Caco-2 (cell line): ENCODE measurements at regions of chr14 and their contacts with region 1.

Region 1: GRCh38 chr14:27890259-27890658 is 876.3 kb upstream of the FOXG1 start:
- DNase-seq: no peak
- H3K4me3 ChIP-seq: no peak overlapping the region
- H3K4me3 Mint-ChIP-seq: no peak overlapping the region
- H3K27ac Mint-ChIP-seq: no peak overlapping the region
- H3K4me1 ChIP-seq: no peaks in the 10 kb centered on the region
- H3K4me1 Mint-ChIP-seq: no peaks in the 10 kb centered on the region
- H3K27me3 ChIP-seq: no peaks in the 10 kb centered on the region
- H3K27me3 Mint-ChIP-seq: no peaks in the 10 kb centered on the region
- CTCF ChIP-seq: no peak

Region 2: GRCh38 chr14:27845241-27845850 is 44.9 kb before region 1 on chr14:
- CTCF ChIA-PET with region 1: no interaction called
- POLR2A ChIA-PET with region 1: no interaction called
- intact Hi-C with region 1: no loop called
- DNase-seq: no peak
- H3K4me3 ChIP-seq: no peak overlapping the region
- H3K4me3 Mint-ChIP-seq: no peak overlapping the region
- H3K27ac Mint-ChIP-seq: no peak overlapping the region
- H3K4me1 ChIP-seq: no peaks in the 10 kb centered on the region
- H3K4me1 Mint-ChIP-seq: peaks cover 8% of the 10 kb centered on the region
- H3K27me3 ChIP-seq: no peaks in the 10 kb centered on the region
- H3K27me3 Mint-ChIP-seq: peaks cover 2% of the 10 kb centered on the region
- CTCF ChIP-seq: no peak

Region 3: DNA sequence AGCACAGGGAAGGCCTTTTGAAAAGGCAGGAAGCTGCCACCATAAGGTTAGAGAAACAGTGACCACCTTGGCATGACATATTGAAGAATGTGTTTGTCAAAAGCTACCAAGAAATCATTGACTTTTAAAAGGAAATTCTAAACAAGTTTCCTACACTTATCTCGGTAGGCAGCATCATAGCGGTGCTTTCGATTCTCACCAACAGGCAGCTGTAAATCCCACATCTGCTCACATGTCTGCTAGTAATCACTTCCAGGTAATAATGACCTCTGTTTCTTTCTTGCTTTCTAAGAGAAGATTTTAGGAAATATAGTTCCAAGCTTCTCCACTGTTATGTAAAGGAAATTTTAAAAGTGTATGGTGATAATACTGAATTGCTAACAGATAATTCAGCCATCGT is 55.3 kb after region 1 on chr14:
- CTCF ChIA-PET with region 1: no interaction called
- POLR2A ChIA-PET with region 1: no interaction called
- intact Hi-C with region 1: loop called (anchors 2 kb)
- DNase-seq: no peak
- H3K4me3 ChIP-seq: no peak overlapping the region
- H3K4me3 Mint-ChIP-seq: no peak overlapping the region
- H3K27ac Mint-ChIP-seq: no peak overlapping the region
- H3K4me1 ChIP-seq: no peaks in the 10 kb centered on the region
- H3K4me1 Mint-ChIP-seq: no peaks in the 10 kb centered on the region
- H3K27me3 ChIP-seq: no peaks in the 10 kb centered on the region
- H3K27me3 Mint-ChIP-seq: no peaks in the 10 kb centered on the region
- CTCF ChIP-seq: no peak